Calu3 (cell line): ENCODE measurements at regions of chr4 and their contacts with region 1.

Region 1: GRCh38 chr4:165537028-165537648 is 158.3 kb downstream of the CPE start:
- DNase-seq: peak; percentile 14
- H3K4me3 Mint-ChIP-seq: no peak overlapping the region
- H3K27ac Mint-ChIP-seq: no peak overlapping the region
- H3K4me1 Mint-ChIP-seq: no peaks in the 10 kb centered on the region
- H3K27me3 Mint-ChIP-seq: no peaks in the 10 kb centered on the region
- CTCF ChIP-seq: peak; percentile 42

Region 2: DNA sequence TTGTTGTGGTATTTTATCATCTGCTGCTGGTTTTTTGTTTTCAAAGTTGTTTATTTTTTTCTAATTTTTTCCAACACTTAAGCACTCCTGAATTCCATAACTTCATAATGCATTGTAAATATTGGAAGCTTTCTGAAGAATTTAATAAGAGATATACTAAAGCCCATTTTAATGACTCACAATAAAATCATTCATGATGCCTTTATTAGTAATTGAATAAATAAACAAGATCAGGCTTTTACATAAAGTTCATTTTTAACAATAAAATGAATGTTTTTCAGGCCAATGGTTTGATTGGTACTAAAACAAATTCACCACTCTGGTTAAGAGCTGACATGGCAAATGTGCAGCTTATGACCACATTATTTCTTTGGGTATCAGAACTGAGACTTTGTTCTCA is 1191.4 kb before region 1 on chr4:
- CTCF ChIA-PET with region 1: no interaction called
- intact Hi-C with region 1: no loop called
- DNase-seq: no peak
- H3K4me3 Mint-ChIP-seq: no peak overlapping the region
- H3K27ac Mint-ChIP-seq: no peak overlapping the region
- H3K4me1 Mint-ChIP-seq: no peaks in the 10 kb centered on the region
- H3K27me3 Mint-ChIP-seq: no peaks in the 10 kb centered on the region
- CTCF ChIP-seq: no peak

Region 3: DNA sequence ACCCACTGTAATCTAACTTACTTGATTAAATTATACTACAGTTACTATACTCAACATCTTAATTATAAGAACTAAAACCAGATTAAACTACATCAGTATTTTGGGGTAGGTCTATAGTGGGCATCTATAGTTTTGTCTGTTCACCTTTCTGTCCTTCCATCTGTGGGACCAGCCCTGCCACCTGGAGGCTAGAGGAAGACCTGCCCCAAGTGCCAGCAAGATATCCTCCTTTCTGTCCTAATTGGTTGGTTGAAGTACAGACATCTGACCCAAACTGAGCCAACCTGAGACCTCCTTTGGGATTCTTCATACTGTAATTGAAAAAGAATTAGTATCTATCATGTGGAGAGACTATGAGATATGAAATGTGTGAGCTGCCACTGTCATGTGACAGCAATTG is 163.7 kb after region 1 on chr4:
- CTCF ChIA-PET with region 1: no interaction called
- intact Hi-C with region 1: loop called (anchors 5 kb)
- DNase-seq: no peak
- H3K4me3 Mint-ChIP-seq: no peak overlapping the region
- H3K27ac Mint-ChIP-seq: no peak overlapping the region
- H3K4me1 Mint-ChIP-seq: no peaks in the 10 kb centered on the region
- H3K27me3 Mint-ChIP-seq: no peaks in the 10 kb centered on the region
- CTCF ChIP-seq: no peak

Region 4: GRCh38 chr4:165780735-165781134 is 243.6 kb after region 1 on chr4:
- CTCF ChIA-PET with region 1: no interaction called
- intact Hi-C with region 1: loop called (anchors 1 kb)
- DNase-seq: no peak
- H3K4me3 Mint-ChIP-seq: no peak overlapping the region
- H3K27ac Mint-ChIP-seq: no peak overlapping the region
- H3K4me1 Mint-ChIP-seq: peaks cover 12% of the 10 kb centered on the region
- H3K27me3 Mint-ChIP-seq: no peaks in the 10 kb centered on the region
- CTCF ChIP-seq: no peak

Region 5: DNA sequence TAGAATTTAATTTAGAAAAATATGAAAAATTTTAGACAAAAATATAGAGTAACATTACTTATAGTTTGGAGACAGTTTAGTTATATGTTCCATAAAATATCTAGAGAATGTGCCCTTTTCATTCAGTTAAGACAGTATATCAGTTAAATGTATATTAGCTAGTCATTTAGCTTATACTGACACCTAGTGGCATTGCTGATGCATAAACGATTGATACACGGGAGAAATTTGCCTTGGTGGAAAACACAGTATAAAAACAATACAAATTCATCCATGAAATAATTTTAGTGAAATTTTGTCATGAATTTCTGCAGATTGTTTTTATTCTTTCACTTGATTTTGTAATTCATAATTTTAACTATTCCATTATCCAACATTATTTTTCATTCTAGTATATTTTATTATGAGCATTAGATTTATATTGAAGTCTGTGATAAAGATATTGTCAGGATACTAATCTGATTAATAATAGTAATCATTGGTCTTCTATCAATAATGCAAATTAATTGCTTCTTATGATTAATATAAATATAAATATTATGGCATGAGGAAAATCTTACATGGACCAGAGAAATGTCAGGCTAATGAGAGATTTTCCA is 554.9 kb after region 1 on chr4:
- CTCF ChIA-PET with region 1: interaction called, 3 read pairs
- intact Hi-C with region 1: loop called (anchors 1 kb)
- DNase-seq: no peak
- H3K4me3 Mint-ChIP-seq: no peak overlapping the region
- H3K27ac Mint-ChIP-seq: no peak overlapping the region
- H3K4me1 Mint-ChIP-seq: peaks cover 11% of the 10 kb centered on the region
- H3K27me3 Mint-ChIP-seq: no peaks in the 10 kb centered on the region
- CTCF ChIP-seq: peak; percentile 22

Region 6: GRCh38 chr4:166252487-166253402 is 715.6 kb after region 1 on chr4:
- CTCF ChIA-PET with region 1: no interaction called
- intact Hi-C with region 1: loop called (anchors 5 kb)
- DNase-seq: peak; percentile 17
- H3K4me3 Mint-ChIP-seq: no peak overlapping the region
- H3K27ac Mint-ChIP-seq: no peak overlapping the region
- H3K4me1 Mint-ChIP-seq: no peaks in the 10 kb centered on the region
- H3K27me3 Mint-ChIP-seq: no peaks in the 10 kb centered on the region
- CTCF ChIP-seq: peak; percentile 41